Esophagus squamous epithelium (tissue), 5 donors: ENCODE measurements at regions of chr11 and their contacts with region 1.

Region 1: DNA sequence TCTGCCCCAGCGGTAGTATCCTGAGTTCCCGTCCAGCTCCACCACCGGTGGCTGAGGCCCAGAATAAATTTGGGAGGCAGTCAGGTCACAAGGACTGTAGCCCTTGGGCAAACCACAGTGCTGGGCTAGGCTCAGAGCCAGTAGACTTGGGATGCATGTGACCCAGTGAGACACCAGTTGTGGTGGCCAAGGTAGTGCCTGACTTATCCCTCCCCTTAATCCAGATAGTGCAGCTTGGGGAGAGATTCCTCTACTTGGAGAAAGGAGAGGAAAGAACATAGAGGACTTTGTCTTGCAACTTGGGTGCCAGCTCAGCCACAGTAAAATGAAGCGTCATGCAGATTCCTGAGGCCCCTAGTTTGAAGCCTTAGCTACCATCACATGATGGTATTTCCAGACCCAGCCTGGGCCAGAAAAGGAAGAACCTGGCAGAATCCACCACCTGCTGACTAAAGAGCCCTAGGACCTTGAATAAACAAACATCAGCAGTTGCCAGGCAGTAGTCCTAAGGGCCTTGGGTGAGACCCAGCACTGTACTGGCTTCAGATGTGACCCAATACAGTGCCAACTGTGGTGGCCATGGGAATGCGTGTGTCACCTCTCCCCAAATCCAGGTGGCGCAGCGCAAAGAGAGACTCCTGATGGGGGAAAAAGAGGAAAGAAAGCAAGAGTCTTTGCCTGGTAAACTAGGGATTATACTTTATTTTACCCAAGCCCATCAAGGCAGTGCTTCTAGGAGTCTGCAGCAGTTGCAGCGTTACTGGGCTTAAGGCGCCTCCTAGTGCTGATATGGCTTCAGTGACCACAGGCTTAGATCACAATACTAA is 17.0 kb upstream of the DDX10 start:
- DNase-seq: no peak
- H3K4me3 ChIP-seq: no peak overlapping the region
- H3K27ac ChIP-seq: peak overlapping the region in 1 of 4 donors; percentile 53
- H3K4me1 ChIP-seq: peaks cover 0 to 12% (median 7%) of the 10 kb centered on the region in 3 donors
- H3K27me3 ChIP-seq: no peaks in the 10 kb centered on the region
- CTCF ChIP-seq: peak; percentile 40 to 93 (median 74)
- POLR2A ChIP-seq: no peak

Region 2: GRCh38 chr11:108222686-108223448 is 425.0 kb before region 1 on chr11 and contains the start of gene ATM:
- intact Hi-C with region 1: loop called (anchors 10 kb)
- DNase-seq: peak; percentile 91
- H3K4me3 ChIP-seq: peak within 1 kb of the TSS; percentile 61 to 94 (median 70)
- H3K27ac ChIP-seq: peak within 1 kb of the TSS; percentile 95 to 98 (median 97)
- H3K4me1 ChIP-seq: peaks cover 6 to 71% (median 18%) of the 10 kb centered on the region in 3 donors
- H3K27me3 ChIP-seq: no peaks in the 10 kb centered on the region
- CTCF ChIP-seq: peak; percentile 57 to 87 (median 82)
- POLR2A ChIP-seq: peak in 2 of 4 donors; percentile 26 to 43
- total RNA-seq, gene ATM: 13.9 to 52.6 (median 21.7) TPM

Region 3: DNA sequence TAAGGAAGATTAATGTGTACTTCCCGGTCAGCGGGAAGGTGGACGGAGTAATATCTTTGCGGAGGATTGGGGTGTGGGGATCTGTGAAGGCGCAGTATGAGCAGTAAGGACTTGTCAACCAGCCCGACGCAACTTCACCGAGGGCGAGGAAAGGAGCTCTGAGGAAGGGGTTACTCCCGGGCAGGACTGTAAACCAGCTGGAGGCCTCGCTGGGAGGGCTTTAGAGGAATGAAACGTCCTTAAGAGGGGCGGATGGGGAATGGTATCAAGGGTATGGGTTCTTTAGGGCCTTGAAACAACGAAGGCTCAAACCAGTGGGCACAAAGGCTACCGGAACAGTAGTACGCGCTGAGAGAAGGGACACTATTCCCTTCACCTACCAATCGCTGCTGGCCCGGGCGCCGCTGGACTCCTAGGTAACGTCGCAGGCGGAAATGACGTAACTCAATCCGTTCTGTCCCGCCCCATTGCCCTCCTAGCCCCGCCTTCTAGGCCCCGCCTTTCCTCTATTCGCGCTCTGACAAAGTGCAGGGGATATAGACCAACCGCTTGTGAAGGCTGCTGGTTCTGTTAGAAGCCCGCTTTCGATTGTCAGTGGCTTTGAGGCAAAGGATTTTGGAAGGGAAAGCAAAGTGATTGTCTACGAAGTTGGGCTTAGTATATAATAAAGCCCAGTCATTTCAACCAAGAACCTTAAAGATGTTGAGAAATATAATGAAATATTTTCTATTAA is 180.7 kb before region 1 on chr11 and contains the start of gene C11orf65:
- intact Hi-C with region 1: loop called (anchors 10 kb)
- DNase-seq: peak; percentile 86
- H3K4me3 ChIP-seq: peak within 1 kb of the TSS; percentile 53 to 80 (median 69)
- H3K27ac ChIP-seq: peak within 1 kb of the TSS; percentile 97 to 100 (median 98)
- H3K4me1 ChIP-seq: peaks cover 3 to 24% (median 5%) of the 10 kb centered on the region in 3 donors
- H3K27me3 ChIP-seq: no peaks in the 10 kb centered on the region
- CTCF ChIP-seq: no peak
- POLR2A ChIP-seq: peak in 3 of 4 donors; percentile 95 to 98 (median 98)
- total RNA-seq, gene C11orf65: 0.09 to 2.7 (median 0.95) TPM in 3 of 4 donors, not detected in the other